GM18951 (cell line): ENCODE measurements at regions of chr4 and their contacts with region 1.

Region 1: GRCh38 chr4:74189331-74190043 is 31.6 kb downstream of the MTHFD2L start:
- POLR2A ChIP-seq: no peak

Region 2: DNA sequence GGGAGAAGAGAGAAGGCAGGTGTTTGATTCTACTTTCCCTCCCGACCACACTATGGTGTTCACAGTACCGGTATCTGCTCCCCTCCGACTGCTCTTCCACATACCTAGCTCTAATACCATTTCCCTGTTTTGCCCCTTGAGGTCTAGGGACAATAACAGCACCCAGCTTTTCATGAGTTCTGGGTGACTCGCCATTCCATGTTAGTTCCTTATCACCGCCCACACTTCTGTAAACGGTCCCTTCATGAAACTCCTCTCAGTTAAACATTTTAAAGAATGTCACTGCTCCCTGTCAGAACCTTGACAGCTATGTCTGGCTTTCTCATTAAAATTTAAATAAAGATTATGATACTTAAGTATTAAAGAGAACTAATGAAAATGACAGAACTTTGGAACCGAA is 1757.2 kb before region 1 on chr4:
- in situ Hi-C with region 1: no loop called
- POLR2A ChIP-seq: no peak

Region 3: GRCh38 chr4:73869130-73870050 is 320.1 kb before region 1 on chr4 and contains the start of gene CXCL1:
- in situ Hi-C with region 1: no loop called
- POLR2A ChIP-seq: no peak

Region 4: DNA sequence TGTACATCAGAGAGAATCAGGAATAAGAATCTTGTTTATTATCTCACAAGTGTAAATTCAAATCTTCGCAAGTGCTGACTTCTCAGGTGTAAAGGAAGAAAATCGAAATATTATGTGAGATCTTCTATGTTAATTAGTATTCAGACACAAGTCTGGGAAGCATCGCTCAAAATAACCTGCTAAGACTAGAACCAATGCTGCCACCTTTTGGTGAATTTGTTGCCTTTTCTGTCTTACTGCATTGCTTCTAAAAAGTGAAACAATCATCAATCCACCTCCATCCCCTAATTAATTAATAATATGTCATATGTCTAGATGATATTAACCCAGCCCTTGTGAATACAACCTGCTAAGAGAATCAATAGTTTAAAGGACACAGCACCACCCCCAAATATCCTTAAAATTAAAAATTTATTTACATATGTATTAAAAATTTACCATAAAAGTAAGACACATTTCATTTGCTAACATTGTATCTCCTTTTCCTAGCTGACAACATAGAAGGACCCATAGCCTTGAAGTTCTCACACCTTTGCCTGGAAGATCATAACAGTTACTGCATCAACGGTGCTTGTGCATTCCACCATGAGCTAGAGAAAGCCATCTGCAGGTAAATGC is 122.3 kb after region 1 on chr4:
- in situ Hi-C with region 1: loop called (anchors 10 kb)
- POLR2A ChIP-seq: no peak

Region 5: GRCh38 chr4:74516321-74516720 is 326.8 kb after region 1 on chr4:
- in situ Hi-C with region 1: no loop called
- POLR2A ChIP-seq: no peak

Region 6: DNA sequence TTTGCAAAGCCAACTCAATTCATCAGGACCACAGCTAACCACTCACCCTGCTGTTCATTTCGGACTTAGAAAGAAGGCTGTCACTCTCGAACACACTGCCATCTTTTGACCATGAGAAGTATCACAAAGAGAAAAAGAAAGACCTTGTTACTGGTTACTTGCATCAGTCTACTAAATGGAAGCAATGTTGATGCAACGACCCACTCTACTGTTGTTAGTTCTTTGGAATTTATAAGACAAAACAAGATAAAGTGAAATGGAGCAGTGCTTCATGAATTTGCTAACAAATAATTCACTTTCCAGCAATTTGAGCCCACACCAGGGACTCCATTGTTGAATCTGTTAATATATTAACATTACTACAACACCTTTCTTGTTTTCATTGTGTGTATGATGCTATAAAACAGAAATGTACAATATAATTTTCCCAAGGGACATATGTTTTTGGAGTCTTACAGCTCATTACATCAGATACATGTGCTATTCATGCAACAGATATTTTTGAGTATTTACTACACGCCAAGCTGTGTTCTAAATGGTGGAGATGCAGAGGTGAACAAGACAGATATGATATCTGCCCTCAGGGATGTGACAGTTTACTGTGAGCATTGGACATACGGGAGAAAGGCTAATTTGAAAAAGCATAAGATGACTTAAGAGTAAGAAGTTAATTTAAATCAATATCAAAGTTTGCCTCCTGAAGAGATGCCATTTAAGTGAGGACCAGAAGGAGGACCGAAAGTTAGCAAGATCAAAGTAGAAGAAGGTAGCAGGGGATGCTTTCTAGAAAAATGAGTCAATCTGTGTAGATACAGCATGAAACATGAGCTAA is 342.7 kb after region 1 on chr4:
- in situ Hi-C with region 1: loop called (anchors 25 kb)
- POLR2A ChIP-seq: no peak

Region 7: DNA sequence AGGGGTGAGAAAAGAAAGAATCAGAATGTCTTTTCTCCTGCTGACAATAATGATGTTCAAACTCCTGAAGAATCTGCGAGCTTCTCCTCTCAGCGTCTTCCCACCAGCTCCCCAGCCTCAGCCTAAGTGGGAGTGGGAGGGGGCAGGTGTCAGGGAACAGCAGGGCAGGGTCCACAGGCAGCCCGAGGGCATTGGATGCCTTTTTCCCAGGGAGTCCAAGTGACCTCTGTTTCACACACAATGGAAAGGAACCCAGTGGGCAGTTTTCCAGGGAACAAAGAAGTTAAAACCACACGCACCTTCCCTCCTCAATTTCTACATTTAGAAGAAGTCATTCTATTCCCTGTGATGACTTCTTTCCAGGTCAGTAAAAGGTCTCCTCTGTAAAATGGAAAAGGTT is 1021.9 kb after region 1 on chr4:
- in situ Hi-C with region 1: no loop called
- POLR2A ChIP-seq: no peak